ENCODE measurements at regions of chr1 and their contacts with region 1.

Region 1: DNA sequence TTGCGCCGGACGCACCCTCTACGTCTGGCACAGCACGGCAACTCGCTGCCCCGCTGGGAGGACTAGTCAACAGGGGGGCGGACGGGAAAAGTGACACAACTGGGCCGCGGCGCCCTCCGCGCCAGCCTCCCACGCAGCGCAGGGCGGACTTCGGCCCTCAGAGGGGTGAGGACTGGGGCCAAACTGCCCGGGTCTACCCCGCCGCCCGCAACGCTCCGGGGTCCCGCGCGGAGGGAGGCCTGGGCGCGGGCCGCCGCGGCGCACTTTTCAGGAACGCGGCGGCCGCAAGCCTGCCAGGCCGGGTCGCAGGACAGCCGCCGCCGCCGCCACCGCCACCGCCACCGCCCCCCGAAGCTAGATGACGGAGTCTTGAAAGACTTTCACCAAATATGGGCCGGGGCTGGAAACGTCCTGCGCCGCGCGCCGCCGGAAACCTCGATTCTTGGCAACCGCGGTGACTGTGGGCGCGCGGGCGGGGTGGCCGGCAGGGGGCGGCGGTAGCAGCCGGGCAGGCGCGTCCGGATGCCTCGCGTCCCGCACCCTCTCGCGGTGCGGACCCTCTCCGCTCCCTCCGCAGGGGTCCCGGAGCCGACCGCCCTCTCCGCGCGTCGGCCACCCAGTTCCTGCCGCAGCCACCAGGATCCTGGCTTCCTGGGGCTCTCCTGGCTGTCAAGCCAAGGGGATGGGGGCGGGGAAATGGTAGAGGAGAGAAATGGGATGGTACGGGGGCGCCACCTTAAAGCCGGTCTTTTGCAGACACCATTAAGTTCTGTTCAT is 3.7 kb upstream of the CCN1 start:
- DNase-seq: peak in 8 of 10 donors; percentile 24 to 71 (median 64)
- H3K4me3 ChIP-seq: peak overlapping the region; percentile 41 to 79 (median 69)
- H3K27ac ChIP-seq: peak overlapping the region in 58 of 59 donors; percentile 21 to 95 (median 86)
- H3K27me3 ChIP-seq: peaks cover 0 to 8% (median 0%) of the 10 kb centered on the region in 45 donors
- CTCF ChIP-seq: peak in 55 of 56 donors; percentile 23 to 74 (median 58)

Region 2: DNA sequence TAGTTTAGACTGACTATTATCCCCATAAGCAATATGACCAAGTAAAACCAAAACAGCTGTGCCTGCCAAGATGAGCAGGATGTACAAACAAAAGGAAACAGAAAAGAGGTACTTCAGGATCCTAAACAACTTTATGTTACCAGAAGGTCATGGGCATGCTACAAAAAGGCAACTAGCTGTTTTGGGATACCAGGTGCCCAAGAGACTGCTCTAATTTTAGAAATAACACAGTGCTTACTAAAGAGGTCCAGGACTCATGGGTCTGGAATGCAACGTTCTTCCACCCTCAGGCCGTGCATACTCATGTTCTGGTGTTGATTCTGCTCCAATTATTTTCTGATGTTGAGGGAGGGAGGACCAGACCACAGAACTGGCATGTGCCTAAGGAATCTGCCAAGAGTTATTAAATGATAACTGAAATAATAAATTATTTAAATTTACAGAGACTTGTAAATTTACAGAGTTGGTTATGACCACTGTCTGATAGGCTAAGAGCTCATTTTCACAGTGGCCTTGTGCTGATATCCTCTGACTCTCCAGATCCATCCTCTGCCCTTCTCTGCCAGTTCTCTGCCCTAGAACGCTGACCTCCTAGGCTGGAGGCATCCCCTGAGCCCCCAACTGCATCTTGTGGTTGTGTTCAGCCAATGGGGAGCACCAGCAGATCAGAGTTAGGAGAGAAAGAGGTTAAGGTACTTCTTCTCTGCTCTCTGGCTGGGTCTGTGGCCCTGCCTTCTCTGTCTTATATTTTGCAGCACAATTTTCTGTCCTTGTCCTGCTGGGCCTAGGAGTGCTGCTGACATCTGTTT is 262.7 kb before region 1 on chr1:
- intact Hi-C with region 1: loop called in 1 of 2 experiments (anchors 10 kb)
- DNase-seq: no peak
- H3K4me3 ChIP-seq: no peak overlapping the region
- H3K27ac ChIP-seq: no peak overlapping the region
- H3K27me3 ChIP-seq: peaks cover 0 to 4% (median 0%) of the 10 kb centered on the region in 45 donors
- CTCF ChIP-seq: no peak

Region 3: GRCh38 chr1:85607126-85607912 is 30.5 kb after region 1 on chr1:
- intact Hi-C with region 1: no loop called
- DNase-seq: no peak
- H3K4me3 ChIP-seq: no peak overlapping the region
- H3K27ac ChIP-seq: no peak overlapping the region
- H3K27me3 ChIP-seq: no peaks in the 10 kb centered on the region
- CTCF ChIP-seq: no peak

Region 4: DNA sequence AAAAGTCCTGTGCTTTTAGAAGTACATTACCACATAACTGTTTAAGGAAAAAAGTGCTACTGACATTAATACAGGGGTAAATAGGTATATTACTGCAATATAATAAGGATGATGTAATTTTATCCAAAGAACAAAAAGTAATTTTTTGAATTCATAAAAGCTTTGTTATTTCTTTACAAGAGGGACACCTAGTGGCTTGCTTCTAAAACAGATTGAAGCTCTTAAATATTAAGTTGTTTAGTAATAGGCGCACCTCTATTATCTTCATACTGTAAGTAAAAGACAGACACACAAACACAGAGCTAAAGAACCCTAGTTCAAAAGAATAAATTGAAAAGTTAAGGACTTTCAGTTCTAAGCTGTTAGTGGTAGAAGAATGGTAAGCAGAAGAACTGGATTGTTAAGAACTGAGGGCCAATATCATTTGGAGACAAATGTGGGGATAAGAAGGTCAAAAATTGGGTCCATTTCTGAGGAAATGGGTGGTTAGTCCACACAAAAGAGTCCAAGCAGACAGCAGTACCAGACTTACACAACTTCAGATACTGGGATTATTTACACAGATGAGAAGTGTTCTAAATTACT is 116.0 kb after region 1 on chr1:
- intact Hi-C with region 1: loop called in 1 of 2 experiments (anchors 10 kb)
- DNase-seq: no peak
- H3K4me3 ChIP-seq: no peak overlapping the region
- H3K27ac ChIP-seq: peak overlapping the region in 1 of 59 donors; percentile 14
- H3K27me3 ChIP-seq: no peaks in the 10 kb centered on the region
- CTCF ChIP-seq: peak in 54 of 56 donors; percentile 31 to 75 (median 56)

Region 5: DNA sequence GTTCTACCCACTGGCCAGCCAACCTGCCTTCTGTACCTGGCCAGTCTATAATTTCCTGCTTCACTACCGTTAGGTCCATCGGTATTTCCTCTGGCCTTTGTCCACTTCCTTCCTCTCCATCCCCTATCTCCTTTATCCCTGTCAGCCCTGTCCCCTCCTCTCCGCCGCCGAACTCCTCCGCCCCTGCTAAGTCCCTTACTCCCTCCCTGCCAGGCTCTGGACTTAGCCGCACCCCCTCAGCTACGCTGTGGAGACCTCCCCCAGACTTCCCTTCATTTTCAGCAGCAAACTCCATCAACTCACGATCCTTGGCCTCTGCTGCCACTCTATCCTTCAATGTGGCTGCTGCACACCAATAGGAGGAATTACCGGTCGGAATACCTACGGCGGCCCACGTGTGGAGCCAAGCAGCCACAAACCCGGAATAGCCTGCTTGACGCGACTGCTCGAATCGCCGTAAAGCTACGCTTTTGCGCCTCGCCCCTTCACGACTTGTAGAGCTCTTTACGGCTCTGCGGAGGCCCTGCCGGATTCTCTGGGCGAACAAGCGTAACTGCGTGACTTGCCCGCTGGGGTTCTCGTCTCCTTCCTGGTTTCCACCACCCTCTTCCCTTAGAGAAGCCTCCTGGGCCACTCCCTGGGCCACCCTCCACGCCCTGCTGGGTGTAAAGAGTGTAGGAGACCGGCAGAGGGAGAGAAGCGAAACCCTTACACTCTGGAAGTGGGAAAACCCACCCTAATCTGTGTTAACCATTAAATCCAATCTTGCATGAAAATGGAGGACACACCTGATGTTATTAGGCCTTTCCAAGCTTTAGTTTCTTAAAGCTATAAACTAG is 131.4 kb after region 1 on chr1 and contains the start of gene ZNHIT6:
- intact Hi-C with region 1: loop called in 1 of 2 experiments (anchors 10 kb)
- DNase-seq: peak; percentile 69 to 95 (median 90)
- H3K4me3 ChIP-seq: peak within 1 kb of the TSS; percentile 61 to 98 (median 86)
- H3K27ac ChIP-seq: peak within 1 kb of the TSS in 58 of 59 donors; percentile 71 to 98 (median 92)
- H3K27me3 ChIP-seq: no peaks in the 10 kb centered on the region
- CTCF ChIP-seq: peak in 41 of 56 donors; percentile 4 to 57 (median 35)
- total RNA-seq, gene ZNHIT6: 18.2 to 31.5 (median 22.8) TPM

Measured in dorsolateral prefrontal cortex (tissue), 120 donors.